ENCODE measurements at regions of chr2 and their contacts with region 1.

Region 1: DNA sequence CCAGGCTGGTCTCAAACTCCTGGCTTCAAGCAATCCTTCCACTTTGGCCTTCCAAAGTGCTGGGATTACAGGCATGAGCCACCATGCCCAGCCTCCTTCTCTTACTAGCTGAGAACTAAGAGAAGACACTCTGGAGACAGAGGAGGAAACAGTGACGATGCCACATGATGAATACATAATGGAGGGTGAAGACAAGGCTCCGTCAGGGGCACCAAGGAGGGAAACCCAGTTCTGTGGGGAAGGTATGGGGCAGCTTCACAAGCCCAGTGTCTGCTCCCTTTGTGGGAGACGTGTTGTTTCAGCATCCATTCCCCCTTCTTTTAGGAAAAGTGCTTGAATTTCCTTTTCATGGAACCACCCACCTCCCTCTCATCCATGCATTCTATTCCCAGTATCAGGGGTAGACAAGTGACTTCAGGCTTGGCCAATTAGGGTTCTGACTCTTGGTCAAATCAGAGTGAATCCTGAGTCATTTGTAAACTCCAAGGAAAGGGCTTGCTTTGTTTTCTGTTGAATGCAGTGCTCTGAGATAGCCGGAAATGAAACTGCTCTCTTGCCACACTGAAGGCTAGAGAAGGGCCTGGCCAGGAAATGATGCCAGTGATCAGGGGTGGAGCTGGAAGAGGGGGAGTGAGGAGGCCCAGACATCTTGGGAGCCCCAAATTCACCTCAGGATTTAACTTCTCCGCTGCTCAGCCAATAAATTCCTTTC is 23.7 kb downstream of the TMEM127 start:
- DNase-seq: no peak
- ATAC-seq: peak; percentile 89
- H3K4me3 Mint-ChIP-seq: peak overlapping the region; percentile 56
- H3K27ac Mint-ChIP-seq: peak overlapping the region; percentile 90
- H3K4me1 Mint-ChIP-seq: peaks cover 49% of the 10 kb centered on the region
- H3K27me3 Mint-ChIP-seq: no peaks in the 10 kb centered on the region
- CTCF ChIP-seq: no peak

Region 2: GRCh38 chr2:96099861-96100798 is 141.9 kb before region 1 on chr2:
- CTCF ChIA-PET with region 1: no interaction called
- POLR2A ChIA-PET with region 1: no interaction called
- intact Hi-C with region 1: no loop called
- DNase-seq: no peak
- ATAC-seq: no peak
- H3K4me3 Mint-ChIP-seq: no peak overlapping the region
- H3K27ac Mint-ChIP-seq: no peak overlapping the region
- H3K4me1 Mint-ChIP-seq: peaks cover 2% of the 10 kb centered on the region
- H3K27me3 Mint-ChIP-seq: no peaks in the 10 kb centered on the region
- CTCF ChIP-seq: no peak

Region 3: DNA sequence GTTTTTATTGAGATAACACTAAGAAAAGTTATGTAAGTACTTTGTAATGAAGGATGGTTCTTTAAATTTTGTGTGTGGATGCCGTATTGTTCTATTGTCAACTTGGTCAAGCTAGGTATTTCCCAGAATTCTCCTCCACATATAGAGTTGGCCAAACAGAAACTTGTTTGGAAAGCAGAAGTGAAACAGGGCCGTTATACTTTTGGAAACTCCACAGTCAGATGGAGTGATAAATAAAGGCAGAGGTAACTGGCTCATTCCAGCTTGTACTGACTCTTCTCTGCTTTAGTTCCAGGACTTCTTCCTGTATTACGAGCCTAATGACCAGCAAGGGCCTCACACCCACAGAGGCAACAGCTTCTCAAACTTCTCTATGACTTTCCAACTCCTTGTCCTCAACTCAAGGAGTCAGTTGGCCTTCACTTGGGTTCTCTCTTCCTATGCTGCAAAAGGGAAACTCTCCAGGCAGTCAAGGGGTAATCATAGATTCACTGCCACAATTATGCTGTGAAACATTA is 17.0 kb before region 1 on chr2:
- CTCF ChIA-PET with region 1: no interaction called
- POLR2A ChIA-PET with region 1: interaction called, 12 read pairs
- intact Hi-C with region 1: loop called (anchors 2 kb)
- DNase-seq: no peak
- ATAC-seq: peak; percentile 86
- H3K4me3 Mint-ChIP-seq: peak overlapping the region; percentile 66
- H3K27ac Mint-ChIP-seq: peak overlapping the region; percentile 90
- H3K4me1 Mint-ChIP-seq: peaks cover 13% of the 10 kb centered on the region
- H3K27me3 Mint-ChIP-seq: no peaks in the 10 kb centered on the region
- CTCF ChIP-seq: no peak

Region 4: GRCh38 chr2:96254571-96254970 is 12.5 kb after region 1 on chr2:
- CTCF ChIA-PET with region 1: interaction called, 4 read pairs
- POLR2A ChIA-PET with region 1: interaction called, 9 read pairs
- intact Hi-C with region 1: loop called (anchors 2 kb)
- DNase-seq: no peak
- ATAC-seq: no peak
- H3K4me3 Mint-ChIP-seq: no peak overlapping the region
- H3K27ac Mint-ChIP-seq: no peak overlapping the region
- H3K4me1 Mint-ChIP-seq: peaks cover 50% of the 10 kb centered on the region
- H3K27me3 Mint-ChIP-seq: no peaks in the 10 kb centered on the region
- CTCF ChIP-seq: no peak

Region 5: GRCh38 chr2:96260404-96261260 is 18.6 kb after region 1 on chr2:
- CTCF ChIA-PET with region 1: interaction called, 4 read pairs
- POLR2A ChIA-PET with region 1: interaction called, 9 read pairs
- intact Hi-C with region 1: loop called (anchors 1 kb)
- DNase-seq: no peak
- ATAC-seq: peak; percentile 56
- H3K4me3 Mint-ChIP-seq: peak overlapping the region; percentile 36
- H3K27ac Mint-ChIP-seq: peak overlapping the region; percentile 80
- H3K4me1 Mint-ChIP-seq: peaks cover 89% of the 10 kb centered on the region
- H3K27me3 Mint-ChIP-seq: no peaks in the 10 kb centered on the region
- CTCF ChIP-seq: no peak

Measured in activated B cell treated with CpG ODN at 0.5 μM for 24 hours (primary cell).